Breast epithelium (tissue), 4 donors: ENCODE measurements at regions of chr18 and their contacts with region 1.

Region 1: GRCh38 chr18:3199942-3200645 is 19.7 kb downstream of the MYOM1 start:
- DNase-seq: no peak
- H3K4me3 ChIP-seq: no peak overlapping the region
- H3K27ac ChIP-seq: no peak overlapping the region
- H3K4me1 ChIP-seq: no peaks in the 10 kb centered on the region
- H3K27me3 ChIP-seq: no peaks in the 10 kb centered on the region
- CTCF ChIP-seq: no peak
- POLR2A ChIP-seq: no peak

Region 2: DNA sequence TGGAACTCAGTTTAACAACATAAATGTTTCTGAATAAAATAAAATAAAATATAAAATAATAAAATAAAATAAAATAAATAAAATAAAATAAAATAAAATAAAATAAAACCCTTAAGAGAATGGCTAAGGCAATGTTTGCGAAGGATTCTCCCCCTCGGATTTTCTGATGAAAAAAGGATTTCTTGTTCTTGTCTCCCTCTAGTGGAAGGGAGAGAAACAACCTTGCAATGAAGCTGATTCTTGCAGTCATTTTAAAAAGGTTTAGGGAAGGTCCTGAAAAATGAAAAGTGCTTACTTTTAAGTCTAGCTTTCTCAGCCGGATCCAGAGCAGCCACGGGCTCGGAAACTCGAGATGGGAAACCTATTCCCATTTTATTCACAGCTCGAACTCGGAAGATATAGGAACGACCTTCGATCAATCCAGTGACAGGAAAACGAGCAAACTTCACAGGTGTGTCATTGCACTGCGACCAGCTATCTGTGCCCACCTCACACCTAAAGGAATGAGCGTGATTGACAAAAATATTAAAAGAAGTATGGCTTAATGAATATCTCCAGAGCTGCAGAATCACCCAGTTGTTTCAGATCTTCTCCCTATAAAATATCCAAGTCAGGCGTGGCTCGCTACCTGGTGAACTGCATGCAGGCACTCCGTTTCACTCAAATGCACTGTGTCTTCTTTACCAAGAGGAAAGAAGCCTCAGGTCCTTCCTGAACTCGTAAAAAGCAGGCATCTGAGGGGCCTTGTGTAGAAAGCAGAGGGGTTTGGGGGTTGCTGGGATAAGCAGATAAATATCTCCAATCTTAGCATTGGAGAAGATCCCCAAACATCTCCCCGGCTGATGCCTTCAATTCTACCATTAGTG is 48.5 kb before region 1 on chr18:
- intact Hi-C with region 1: no loop called
- DNase-seq: no peak
- H3K4me3 ChIP-seq: no peak overlapping the region
- H3K27ac ChIP-seq: no peak overlapping the region
- H3K4me1 ChIP-seq: no peaks in the 10 kb centered on the region
- H3K27me3 ChIP-seq: no peaks in the 10 kb centered on the region
- CTCF ChIP-seq: peak; percentile 46 to 74 (median 47)
- POLR2A ChIP-seq: no peak

Region 3: DNA sequence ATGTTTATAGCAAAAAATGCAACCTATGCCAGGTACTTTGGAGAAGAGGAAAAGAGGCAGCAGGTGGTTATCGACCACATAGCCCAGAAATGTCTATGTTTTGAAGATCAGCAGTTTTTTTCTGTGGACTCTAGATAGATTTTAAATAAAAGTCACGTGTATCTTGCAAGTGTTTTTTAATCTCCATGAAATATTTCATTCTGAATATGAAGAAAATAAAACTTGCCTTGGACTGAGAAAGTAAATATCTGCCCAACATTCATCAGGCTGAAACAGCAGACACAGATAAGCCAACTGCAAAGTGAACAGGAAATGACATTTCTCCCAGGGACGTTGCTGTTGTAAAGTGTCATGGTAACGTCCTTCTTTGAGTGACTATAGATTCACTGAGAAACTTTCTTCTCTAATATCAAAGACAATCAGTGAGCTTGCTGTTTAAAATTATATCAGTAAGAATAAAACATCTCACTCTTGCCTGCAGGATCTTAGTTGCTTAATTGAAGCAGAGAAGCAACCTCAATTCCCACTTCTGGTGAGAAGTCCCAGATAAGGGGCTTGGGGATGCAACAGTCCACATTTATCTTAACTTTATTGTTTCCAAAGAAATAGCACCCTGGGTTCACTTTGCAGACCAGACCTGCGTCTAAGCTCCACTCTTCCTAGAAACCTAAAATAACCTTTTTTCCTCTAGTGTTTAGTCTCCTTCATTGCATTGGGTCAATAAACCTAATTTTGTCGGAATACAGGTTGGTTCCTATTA is 13.4 kb after region 1 on chr18:
- intact Hi-C with region 1: loop called (anchors 2 kb)
- DNase-seq: no peak
- H3K4me3 ChIP-seq: no peak overlapping the region
- H3K27ac ChIP-seq: no peak overlapping the region
- H3K4me1 ChIP-seq: no peaks in the 10 kb centered on the region
- H3K27me3 ChIP-seq: no peaks in the 10 kb centered on the region
- CTCF ChIP-seq: no peak
- POLR2A ChIP-seq: no peak